Motor neuron (in vitro differentiated cells): ENCODE measurements at regions of chr9 and their contacts with region 1.

Region 1: GRCh38 chr9:98255578-98256296 is at the start of gene TBC1D2:
- ATAC-seq: peak; percentile 78 to 92 (median 90)
- H3K4me3 ChIP-seq: peak within 1 kb of the TSS; percentile 51 to 91 (median 75)
- H3K27ac ChIP-seq: peak within 1 kb of the TSS; percentile 91 to 93
- H3K4me1 ChIP-seq: peaks cover 0 to 3% of the 10 kb centered on the region in 2 donors
- total RNA-seq, gene TBC1D2: 0.79 to 10.6 (median 2.1) TPM

Region 2: GRCh38 chr9:97710356-97711222 is 545.1 kb before region 1 on chr9:
- in situ Hi-C with region 1: loop called in 1 of 9 experiments (anchors 25 kb)
- ATAC-seq: peak; percentile 80 to 98 (median 91)
- H3K4me3 ChIP-seq: no peak overlapping the region
- H3K27ac ChIP-seq: no peak overlapping the region
- H3K4me1 ChIP-seq: no peaks in the 10 kb centered on the region

Region 3: DNA sequence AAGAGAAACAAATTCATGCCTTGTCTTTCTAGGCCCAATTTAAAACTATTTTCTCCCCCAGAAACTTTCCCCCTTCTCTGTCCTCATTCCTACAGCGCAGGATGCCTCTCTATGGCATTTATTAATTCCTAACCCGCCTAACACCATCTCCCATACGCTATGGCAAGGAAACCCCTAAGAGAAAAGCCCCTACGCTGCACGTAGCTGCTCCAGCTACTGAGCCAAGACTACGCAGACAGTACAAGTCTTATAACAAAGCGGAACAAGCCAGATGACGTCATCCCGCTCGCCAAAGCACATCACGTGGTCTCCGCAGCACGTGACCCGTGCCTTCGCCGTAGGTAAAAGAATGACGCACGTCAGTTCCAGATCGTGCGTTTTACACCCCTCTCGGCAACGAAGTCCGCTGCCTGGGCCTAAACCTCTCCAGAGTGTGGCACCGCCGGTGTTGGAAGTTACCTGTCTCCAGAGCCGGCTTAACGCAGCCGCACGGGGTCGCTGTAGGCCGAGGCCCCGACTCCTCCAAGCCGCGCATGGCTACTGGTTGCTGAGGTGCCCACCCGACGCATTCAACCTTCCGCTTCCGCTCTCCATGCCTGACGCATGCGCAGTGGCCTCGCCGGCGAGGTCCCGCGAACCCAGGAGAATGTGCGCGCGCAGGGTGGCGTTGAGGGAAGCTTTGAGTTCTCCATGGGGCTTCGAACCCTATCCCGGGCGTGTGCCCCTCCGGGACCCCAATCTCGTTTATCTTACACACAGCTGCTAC is 333.6 kb before region 1 on chr9 and contains the start of gene TRMO:
- in situ Hi-C with region 1: loop called in 2 of 9 experiments (anchors 25 kb)
- ATAC-seq: peak; percentile 82 to 94 (median 90)
- H3K4me3 ChIP-seq: peak within 1 kb of the TSS; percentile 44 to 64 (median 57)
- H3K27ac ChIP-seq: peak within 1 kb of the TSS; percentile 96 to 97
- H3K4me1 ChIP-seq: peaks cover 6 to 7% of the 10 kb centered on the region in 2 donors
- total RNA-seq, gene TRMO: 4.3 to 19.5 (median 11.5) TPM

Region 4: DNA sequence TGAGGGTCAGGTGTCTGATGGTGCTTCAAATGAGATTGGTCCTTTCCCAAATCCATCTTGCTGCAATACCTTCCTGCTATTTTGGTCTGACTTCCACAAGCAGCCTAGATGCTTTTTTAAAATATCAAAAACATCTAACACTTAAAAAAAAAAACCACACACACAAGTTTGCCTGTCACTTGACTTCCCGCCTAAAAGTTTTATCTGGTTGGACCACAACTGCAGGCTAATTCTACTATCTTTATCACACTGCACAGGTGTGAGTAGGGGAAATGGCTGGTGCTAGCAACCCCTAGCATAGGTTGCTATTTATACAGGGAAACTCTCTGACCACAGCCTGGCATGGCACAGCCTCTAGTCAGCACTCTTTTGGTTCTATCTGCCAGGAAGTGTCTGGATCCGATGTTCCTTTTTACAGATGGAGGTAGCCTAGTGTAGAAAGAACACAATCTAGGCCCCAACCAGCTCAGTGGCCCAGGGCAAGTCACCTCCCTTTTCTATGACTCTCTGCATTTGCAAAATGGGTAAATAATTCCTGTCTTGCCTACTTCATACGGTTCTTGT is 317.6 kb before region 1 on chr9 and contains the start of gene HEMGN:
- in situ Hi-C with region 1: loop called in 1 of 9 experiments (anchors 25 kb)
- ATAC-seq: peak in 2 of 8 experiments; percentile 48 to 60
- H3K4me3 ChIP-seq: no peak within 1 kb of the TSS
- H3K27ac ChIP-seq: no peak within 1 kb of the TSS
- H3K4me1 ChIP-seq: no peaks in the 10 kb centered on the region
- total RNA-seq, gene HEMGN: 0.09 to 1.3 (median 0.24) TPM in 5 of 8 experiments, not detected in the others

Region 5: GRCh38 chr9:98056269-98057137 is 199.2 kb before region 1 on chr9 and contains the start of gene NANS:
- in situ Hi-C with region 1: loop called in 1 of 9 experiments (anchors 25 kb)
- ATAC-seq: peak; percentile 89 to 97 (median 96)
- H3K4me3 ChIP-seq: peak within 1 kb of the TSS; percentile 79 to 95 (median 81)
- H3K27ac ChIP-seq: peak within 1 kb of the TSS; percentile 78 to 90
- H3K4me1 ChIP-seq: no peaks in the 10 kb centered on the region
- total RNA-seq, gene NANS: 33.8 to 109 (median 65.5) TPM

Region 6: DNA sequence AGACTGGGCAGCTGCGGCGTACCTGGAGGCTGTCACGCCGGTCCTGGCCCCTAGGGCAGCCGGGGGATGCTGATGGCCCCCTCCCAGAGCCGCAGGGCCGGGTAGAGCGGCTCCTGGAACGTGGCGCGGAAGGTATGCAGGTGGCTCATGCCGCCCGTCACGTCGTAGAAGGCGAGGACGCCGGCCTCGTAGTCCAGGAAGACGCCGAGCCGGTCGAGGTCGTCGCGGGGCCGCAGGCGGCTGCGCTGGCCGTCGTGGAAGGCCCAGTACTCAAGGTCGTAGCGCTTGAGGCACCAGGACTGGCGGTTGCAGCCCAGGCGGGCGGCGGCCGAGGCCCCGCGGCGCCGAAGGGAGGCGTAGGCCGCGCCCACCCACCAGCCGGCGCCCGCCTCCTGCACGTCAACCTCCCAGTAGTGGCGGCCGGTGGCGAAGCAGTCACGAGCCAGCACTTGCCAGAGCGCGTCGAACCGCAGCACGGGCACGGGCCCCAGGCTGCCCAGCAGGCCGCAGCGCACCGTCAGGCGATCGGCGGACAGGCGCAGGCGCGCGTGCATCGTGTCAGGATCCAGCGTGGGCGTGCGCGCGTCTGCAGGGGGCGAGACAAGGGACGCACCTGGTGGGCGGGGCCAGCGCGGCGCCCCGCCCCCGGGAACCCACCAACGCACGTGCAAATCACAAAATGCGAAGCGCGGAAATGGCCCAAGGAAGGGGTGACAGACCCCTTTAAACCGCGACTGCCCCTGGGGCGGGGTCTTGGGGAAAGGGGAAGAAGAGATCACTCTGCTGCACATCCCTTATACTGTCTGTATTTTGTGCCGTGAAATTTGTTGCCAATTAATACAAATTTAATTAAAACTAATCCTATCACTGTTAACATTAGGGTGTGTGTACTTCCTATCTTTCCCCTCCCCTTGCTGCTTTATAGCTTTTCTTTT is 168.1 kb before region 1 on chr9:
- in situ Hi-C with region 1: loop called in 2 of 9 experiments (anchors 25 kb)
- ATAC-seq: peak in 5 of 8 experiments; percentile 7 to 63 (median 53)
- H3K4me3 ChIP-seq: no peak overlapping the region
- H3K27ac ChIP-seq: no peak overlapping the region
- H3K4me1 ChIP-seq: peaks cover 7 to 10% of the 10 kb centered on the region in 2 donors

Region 7: DNA sequence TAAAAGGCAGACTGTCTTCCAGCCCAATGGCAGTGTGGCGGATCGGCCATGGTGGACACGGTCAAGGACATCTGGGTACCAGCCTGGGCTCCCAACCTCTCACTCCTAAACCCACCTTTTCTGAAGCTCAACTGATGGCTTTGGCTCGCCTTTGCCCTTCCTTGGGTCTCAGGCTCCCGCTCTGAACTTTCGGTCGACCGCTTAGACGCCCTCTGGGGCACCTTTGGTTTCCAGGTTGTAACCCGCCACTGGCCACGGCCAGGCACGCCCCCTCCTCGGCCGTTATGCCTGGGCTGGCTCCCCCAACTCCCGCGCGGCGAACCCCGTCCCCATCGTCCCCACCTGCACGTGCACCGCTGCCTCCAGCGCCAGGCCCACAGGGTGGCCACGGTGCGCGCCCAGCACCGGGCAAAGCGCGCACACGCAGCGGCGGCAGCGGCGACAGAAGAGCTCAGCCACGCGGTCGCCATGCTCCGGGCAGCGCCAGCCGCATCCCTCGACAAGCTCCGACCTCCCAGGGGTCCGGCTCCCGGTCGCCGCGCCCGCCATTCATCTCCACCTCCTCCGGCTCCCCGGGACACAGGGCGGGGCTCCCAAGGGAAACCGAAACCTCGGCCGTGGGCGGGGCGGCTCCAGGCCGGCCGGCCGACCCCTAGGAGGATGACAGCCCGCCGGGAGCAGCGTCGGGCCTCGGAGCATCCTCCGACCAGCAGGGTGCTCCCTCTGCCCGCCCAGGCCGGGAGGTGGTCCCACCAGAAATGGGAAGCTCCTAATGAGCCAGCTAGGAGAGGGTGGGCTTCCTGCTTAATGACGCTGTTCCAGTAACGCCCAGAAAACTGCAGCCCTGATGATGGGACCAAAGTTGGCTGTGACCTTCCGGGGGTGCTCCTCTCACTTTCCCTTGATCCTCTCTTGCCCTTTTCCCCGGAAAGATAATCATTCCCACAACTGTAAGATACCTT is 136.8 kb before region 1 on chr9 and contains the start of gene TRIM14:
- in situ Hi-C with region 1: loop called in 1 of 9 experiments (anchors 25 kb)
- ATAC-seq: peak; percentile 84 to 94 (median 92)
- H3K4me3 ChIP-seq: peak within 1 kb of the TSS; percentile 27 to 51 (median 37)
- H3K27ac ChIP-seq: no peak within 1 kb of the TSS
- H3K4me1 ChIP-seq: peaks cover 0 to 7% of the 10 kb centered on the region in 2 donors
- total RNA-seq, gene TRIM14: 0.38 to 20.3 (median 1.3) TPM